ENCODE measurements at regions of chr21 and their contacts with region 1.

Region 1: DNA sequence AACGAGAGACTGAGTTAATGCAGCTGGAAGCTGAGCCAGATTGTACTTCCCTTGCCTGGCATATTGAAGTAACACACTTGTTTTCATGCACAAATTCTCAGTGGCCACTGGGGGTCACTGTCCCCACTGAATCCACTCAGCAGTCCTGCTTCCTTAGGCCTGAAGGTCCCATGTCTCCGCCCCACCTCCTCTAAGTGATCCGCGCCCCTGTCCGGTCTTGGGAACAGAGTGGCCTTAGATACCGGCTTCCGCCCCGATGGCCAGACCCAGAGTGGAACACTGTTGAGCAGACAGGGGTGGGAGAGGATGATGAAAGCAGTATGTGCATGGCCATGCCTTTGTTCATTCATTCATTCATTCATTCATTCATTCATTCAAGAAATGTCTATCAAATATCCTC is 34.8 kb downstream of the CHAF1B start:
- DNase-seq: peak; percentile 93
- H3K4me3 ChIP-seq: no peak overlapping the region
- H3K27ac ChIP-seq: no peak overlapping the region
- H3K4me1 ChIP-seq: peaks cover 2% of the 10 kb centered on the region
- H3K27me3 ChIP-seq: no peaks in the 10 kb centered on the region
- CTCF ChIP-seq: peak; percentile 76 to 80
- POLR2A ChIP-seq: no peak

Region 2: DNA sequence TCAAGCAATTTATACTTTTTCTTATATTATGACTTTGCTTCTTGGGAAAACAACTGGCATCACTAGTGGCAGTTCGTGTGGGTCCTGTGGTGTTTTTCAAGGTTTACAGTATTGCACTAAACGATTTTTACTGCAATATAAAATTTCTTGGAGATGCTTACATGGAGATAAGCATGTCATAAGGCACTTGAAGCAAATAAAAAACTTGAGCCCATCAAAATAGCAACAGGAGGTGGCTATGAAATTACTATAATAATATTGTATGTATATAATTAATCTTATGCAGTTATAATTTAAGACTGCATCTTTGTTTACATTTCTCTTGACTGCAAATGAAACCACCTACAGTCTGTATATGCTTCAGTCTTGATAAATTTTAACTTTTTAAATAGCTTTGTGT is 64.1 kb before region 1 on chr21:
- CTCF ChIA-PET with region 1: no interaction called
- POLR2A ChIA-PET with region 1: no interaction called
- dilution Hi-C with region 1: no loop called
- intact Hi-C with region 1: no loop called
- DNase-seq: no peak
- H3K4me3 ChIP-seq: no peak overlapping the region
- H3K27ac ChIP-seq: no peak overlapping the region
- H3K4me1 ChIP-seq: no peaks in the 10 kb centered on the region
- H3K27me3 ChIP-seq: no peaks in the 10 kb centered on the region
- CTCF ChIP-seq: no peak
- POLR2A ChIP-seq: no peak

Region 3: GRCh38 chr21:36589355-36589971 is 169.5 kb after region 1 on chr21:
- CTCF ChIA-PET with region 1: interaction called, 15 read pairs
- POLR2A ChIA-PET with region 1: no interaction called
- dilution Hi-C with region 1: no loop called
- intact Hi-C with region 1: loop called (anchors 1 kb)
- DNase-seq: peak; percentile 36
- H3K4me3 ChIP-seq: no peak overlapping the region
- H3K27ac ChIP-seq: no peak overlapping the region
- H3K4me1 ChIP-seq: no peaks in the 10 kb centered on the region
- H3K27me3 ChIP-seq: no peaks in the 10 kb centered on the region
- CTCF ChIP-seq: peak; percentile 55 to 69
- POLR2A ChIP-seq: no peak

Region 4: DNA sequence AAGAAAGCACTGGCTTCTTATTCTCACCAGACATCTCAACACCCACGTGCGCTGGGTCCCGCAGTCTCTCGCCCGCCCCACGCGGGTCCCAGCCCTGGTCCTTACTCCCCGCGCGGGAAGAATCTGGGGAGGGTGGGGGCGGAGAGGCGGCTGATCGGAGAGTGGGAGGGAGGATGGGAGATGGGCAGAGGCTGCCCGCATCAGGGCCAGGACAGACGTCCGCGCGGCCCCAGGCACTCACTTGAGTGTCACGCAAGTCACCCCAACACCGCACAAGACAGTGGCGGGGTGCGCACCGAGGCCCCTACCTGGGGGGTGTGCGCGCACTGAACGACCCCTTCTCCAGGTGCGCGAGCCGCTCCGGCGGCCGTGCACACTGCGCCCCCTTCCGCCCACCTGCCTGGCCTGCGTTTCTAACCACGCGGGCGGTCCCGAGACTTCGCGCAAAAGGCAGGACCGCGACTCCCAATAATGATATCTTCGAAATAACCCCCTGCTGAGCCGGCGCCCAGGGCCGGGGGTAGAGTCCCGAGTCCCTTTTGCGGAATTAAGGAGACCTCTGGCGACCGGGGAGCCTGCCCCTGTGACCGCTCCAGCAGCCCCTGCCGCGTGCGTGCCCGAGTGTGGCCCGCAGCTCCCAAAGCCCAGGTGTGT is 273.0 kb after region 1 on chr21:
- CTCF ChIA-PET with region 1: no interaction called
- POLR2A ChIA-PET with region 1: no interaction called
- dilution Hi-C with region 1: no loop called
- intact Hi-C with region 1: loop called (anchors 2 kb)
- DNase-seq: no peak
- H3K4me3 ChIP-seq: no peak overlapping the region
- H3K27ac ChIP-seq: no peak overlapping the region
- H3K4me1 ChIP-seq: peaks cover 4% of the 10 kb centered on the region
- H3K27me3 ChIP-seq: peaks cover 87 to 97% of the 10 kb centered on the region in 2 experiments
- CTCF ChIP-seq: peak; percentile 23 to 29
- POLR2A ChIP-seq: no peak

Region 5: DNA sequence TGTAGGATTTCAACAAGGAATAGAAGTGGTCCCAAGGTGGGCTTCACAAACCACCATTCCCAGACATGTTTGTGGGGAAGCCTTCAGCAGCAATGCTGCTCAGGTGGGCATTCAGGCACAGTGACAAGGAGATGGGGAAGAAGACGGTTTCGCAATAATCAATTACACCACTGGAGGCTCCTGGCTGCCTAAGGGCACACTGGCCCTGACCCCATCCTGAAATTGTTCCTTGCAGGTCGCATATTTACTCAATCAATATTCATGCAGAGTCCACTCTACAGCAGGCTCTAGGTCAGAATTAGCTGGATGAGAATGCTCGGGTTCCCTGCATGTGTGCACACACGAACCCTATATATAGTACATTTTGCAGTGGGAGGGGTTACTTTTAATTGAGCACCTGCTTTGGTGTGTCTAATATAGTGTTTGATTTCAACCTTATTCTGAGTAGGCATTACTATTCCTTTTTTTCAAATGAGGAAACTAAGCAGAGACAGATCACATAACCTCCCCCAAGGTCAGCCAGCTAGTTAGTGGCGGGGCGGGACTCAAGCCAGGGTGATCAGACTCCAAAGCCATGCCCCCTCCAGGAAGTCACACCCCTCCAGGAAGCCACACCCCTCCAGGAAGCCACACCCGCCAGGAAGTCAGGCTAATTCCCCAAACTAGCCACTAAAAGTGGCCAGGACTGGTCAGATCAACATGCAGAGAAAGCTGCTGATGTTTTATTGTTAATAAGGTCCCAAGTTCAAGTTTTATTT is 439.9 kb after region 1 on chr21:
- CTCF ChIA-PET with region 1: no interaction called
- POLR2A ChIA-PET with region 1: no interaction called
- dilution Hi-C with region 1: no loop called
- intact Hi-C with region 1: loop called (anchors 5 kb)
- DNase-seq: peak; percentile 58
- H3K4me3 ChIP-seq: peak overlapping the region in 1 of 3 experiments; percentile 42
- H3K27ac ChIP-seq: peak overlapping the region; percentile 90
- H3K4me1 ChIP-seq: peaks cover 19% of the 10 kb centered on the region
- H3K27me3 ChIP-seq: no peaks in the 10 kb centered on the region
- CTCF ChIP-seq: no peak
- POLR2A ChIP-seq: peak; percentile 71

Region 6: DNA sequence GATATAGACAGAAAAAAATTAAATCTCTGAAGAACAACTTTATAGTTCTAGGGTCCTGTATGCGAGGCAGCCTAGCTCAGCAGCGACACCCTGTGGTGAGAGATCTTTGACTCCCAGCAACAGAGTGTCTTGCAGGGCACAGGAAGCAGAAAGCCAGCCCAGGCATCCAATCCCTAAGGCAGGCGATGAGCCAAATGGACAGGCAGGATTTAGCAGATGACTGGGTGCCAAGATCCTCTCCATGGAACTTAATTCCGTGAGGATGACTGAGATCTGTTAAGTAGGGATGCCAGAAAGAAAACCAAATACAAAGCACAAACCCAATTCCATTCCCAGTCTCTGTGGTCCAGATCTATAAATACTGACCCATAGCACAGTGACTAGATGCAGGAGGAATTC is 507.7 kb after region 1 on chr21:
- CTCF ChIA-PET with region 1: interaction called, 6 read pairs
- POLR2A ChIA-PET with region 1: no interaction called
- dilution Hi-C with region 1: no loop called
- intact Hi-C with region 1: loop called (anchors 1 kb)
- DNase-seq: peak; percentile 80
- H3K4me3 ChIP-seq: no peak overlapping the region
- H3K27ac ChIP-seq: no peak overlapping the region
- H3K4me1 ChIP-seq: no peaks in the 10 kb centered on the region
- H3K27me3 ChIP-seq: no peaks in the 10 kb centered on the region
- CTCF ChIP-seq: peak; percentile 82 to 89
- POLR2A ChIP-seq: no peak

Region 7: DNA sequence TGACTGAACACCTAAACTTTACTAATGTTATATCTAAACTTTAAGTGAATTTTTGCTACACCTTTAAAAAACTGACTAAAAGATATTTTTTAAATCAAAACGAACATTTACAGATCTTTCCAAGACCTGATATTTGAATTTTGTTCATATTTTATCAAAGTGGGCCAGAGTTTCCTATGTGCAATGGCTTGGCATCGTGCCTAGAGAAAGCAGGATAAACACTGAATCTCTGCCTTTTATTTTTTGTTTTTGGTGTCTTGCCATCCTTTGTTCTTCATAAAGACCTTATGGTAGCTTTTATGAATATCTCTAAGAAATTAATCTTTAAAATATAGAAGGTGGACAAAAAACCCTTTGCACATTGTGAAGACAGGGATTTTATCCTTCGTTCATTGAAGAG is 872.9 kb after region 1 on chr21:
- CTCF ChIA-PET with region 1: no interaction called
- POLR2A ChIA-PET with region 1: no interaction called
- dilution Hi-C with region 1: no loop called
- intact Hi-C with region 1: no loop called
- DNase-seq: peak; percentile 92
- H3K4me3 ChIP-seq: no peak overlapping the region
- H3K27ac ChIP-seq: no peak overlapping the region
- H3K4me1 ChIP-seq: peaks cover 19% of the 10 kb centered on the region
- H3K27me3 ChIP-seq: no peaks in the 10 kb centered on the region
- CTCF ChIP-seq: no peak
- POLR2A ChIP-seq: no peak

Measured in endothelial cell of umbilical vein (primary cell).